Gastrocnemius medialis (tissue), 4 donors: ENCODE measurements at regions of chr15 and their contacts with region 1.

Region 1: DNA sequence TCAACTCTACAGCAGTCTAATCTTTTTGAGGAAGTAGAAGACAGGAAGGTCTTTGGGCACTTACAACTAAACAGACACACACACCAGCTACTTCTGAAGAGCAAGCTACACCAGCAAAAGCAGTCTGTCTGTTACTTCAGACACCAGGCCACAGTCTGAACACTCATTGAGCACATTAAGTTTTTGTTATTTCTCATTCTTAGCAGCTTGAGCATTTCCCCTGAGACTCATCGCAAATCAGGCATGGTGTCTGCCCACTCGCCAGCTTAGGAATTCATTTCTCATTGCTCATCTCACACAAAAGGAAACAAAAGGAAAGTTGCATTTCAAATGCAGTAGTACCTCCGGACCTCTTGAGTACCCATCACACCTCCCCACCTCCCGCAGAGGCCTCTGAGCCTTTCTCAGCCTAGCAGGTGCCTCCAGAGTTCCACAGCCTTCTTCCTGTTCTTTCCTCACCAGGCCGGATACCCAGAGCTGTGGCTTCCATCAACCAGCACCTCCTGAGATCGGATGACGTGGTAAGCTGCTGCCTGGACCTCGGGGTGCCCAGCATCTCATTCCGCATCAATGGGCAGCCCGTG is 302.0 kb downstream of the RYR3 start:
- DNase-seq: no peak
- ATAC-seq: no peak
- H3K4me3 ChIP-seq: no peak overlapping the region
- H3K27ac ChIP-seq: no peak overlapping the region
- H3K4me1 ChIP-seq: peaks cover 0 to 1% of the 10 kb centered on the region in 2 donors
- H3K27me3 ChIP-seq: no peaks in the 10 kb centered on the region
- CTCF ChIP-seq: no peak
- POLR2A ChIP-seq: no peak

Region 2: GRCh38 chr15:33492434-33493052 is 120.3 kb before region 1 on chr15:
- in situ Hi-C with region 1: no loop called
- intact Hi-C with region 1: no loop called
- DNase-seq: no peak
- ATAC-seq: no peak
- H3K4me3 ChIP-seq: no peak overlapping the region
- H3K27ac ChIP-seq: no peak overlapping the region
- H3K4me1 ChIP-seq: no peaks in the 10 kb centered on the region
- H3K27me3 ChIP-seq: no peaks in the 10 kb centered on the region
- CTCF ChIP-seq: no peak
- POLR2A ChIP-seq: no peak

Region 3: GRCh38 chr15:33675246-33675645 is 62.4 kb after region 1 on chr15:
- in situ Hi-C with region 1: no loop called
- intact Hi-C with region 1: loop called (anchors 10 kb)
- DNase-seq: no peak
- ATAC-seq: no peak
- H3K4me3 ChIP-seq: no peak overlapping the region
- H3K27ac ChIP-seq: no peak overlapping the region
- H3K4me1 ChIP-seq: peaks cover 0 to 13% of the 10 kb centered on the region in 2 donors
- H3K27me3 ChIP-seq: no peaks in the 10 kb centered on the region
- CTCF ChIP-seq: peak in 1 of 5 experiments; percentile 11
- POLR2A ChIP-seq: no peak